ENCODE measurements at regions of chr14 and their contacts with region 1.

Region 1: GRCh38 chr14:50619556-50620141 is 48.5 kb downstream of the SAV1 start:
- DNase-seq: no peak
- H3K4me3 ChIP-seq: no peak overlapping the region
- H3K27ac ChIP-seq: no peak overlapping the region
- H3K4me1 ChIP-seq: no peaks in the 10 kb centered on the region
- H3K27me3 ChIP-seq: no peaks in the 10 kb centered on the region
- CTCF ChIP-seq: peak in 2 of 3 experiments; percentile 47 to 65; a peak in 3 of 4 replicates
- EP300 ChIP-seq: no peak
- POLR2A ChIP-seq: no peak
- RAD21 ChIP-seq: peak; percentile 57 to 69

Region 2: DNA sequence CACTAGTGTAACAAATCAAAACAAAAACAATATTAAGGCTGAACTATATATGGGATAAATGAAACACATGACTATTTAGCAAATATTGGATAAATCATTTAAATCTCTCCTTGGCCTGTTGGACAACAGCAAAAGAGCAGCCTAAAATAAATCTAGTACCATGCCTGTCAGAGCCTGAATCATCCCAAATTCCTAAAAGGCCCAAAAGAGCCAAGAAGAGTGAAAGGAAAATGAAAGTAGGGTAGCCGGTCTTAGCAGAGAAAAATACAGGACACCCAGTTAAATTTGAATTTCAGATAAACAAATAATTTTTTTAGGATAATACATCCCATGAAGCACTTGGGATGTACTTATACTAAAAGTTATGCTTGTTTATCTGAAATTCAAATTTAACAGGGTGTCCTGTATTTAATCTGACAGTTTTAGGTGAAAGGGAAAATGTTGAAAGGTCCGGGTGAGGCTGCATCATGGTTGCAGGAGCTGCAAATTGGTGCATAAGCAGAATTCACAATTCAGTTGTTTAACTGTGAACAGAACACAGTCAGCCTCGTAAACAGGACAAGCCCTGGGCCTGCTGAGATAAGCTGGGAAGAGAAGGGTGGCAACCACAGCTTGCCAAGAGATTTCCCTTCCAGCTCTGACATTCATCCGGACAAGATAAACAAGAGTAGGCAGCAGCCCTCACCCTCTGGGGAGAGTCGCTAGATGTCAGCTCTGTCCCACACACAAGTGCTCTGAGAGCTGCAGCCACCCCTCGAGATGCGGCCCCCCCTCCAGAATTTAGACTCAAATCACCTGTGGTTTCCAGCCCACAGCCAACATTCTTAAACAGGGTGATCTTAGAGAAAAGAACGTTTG is 277.2 kb before region 1 on chr14:
- CTCF ChIA-PET with region 1: no interaction called
- POLR2A ChIA-PET with region 1: no interaction called
- DNase-seq: no peak
- H3K4me3 ChIP-seq: no peak overlapping the region
- H3K27ac ChIP-seq: 0 out of 2 replicates have a peak overlapping the region, but pooled peaks have one; percentile 35
- H3K4me1 ChIP-seq: peaks cover 0 to 3% (median 2%) of the 10 kb centered on the region in 4 experiments; a peak in 4 of 7 replicates
- H3K27me3 ChIP-seq: no peaks in the 10 kb centered on the region
- CTCF ChIP-seq: peak; percentile 34 to 50 (median 35)
- EP300 ChIP-seq: no peak
- POLR2A ChIP-seq: no peak
- RAD21 ChIP-seq: peak; percentile 64 to 76

Region 3: GRCh38 chr14:50447461-50447860 is 172.2 kb before region 1 on chr14:
- CTCF ChIA-PET with region 1: no interaction called
- POLR2A ChIA-PET with region 1: no interaction called
- DNase-seq: no peak
- H3K4me3 ChIP-seq: no peak overlapping the region
- H3K27ac ChIP-seq: no peak overlapping the region
- H3K4me1 ChIP-seq: no peaks in the 10 kb centered on the region
- H3K27me3 ChIP-seq: no peaks in the 10 kb centered on the region
- CTCF ChIP-seq: no peak
- EP300 ChIP-seq: no peak
- POLR2A ChIP-seq: no peak
- RAD21 ChIP-seq: no peak

Region 4: DNA sequence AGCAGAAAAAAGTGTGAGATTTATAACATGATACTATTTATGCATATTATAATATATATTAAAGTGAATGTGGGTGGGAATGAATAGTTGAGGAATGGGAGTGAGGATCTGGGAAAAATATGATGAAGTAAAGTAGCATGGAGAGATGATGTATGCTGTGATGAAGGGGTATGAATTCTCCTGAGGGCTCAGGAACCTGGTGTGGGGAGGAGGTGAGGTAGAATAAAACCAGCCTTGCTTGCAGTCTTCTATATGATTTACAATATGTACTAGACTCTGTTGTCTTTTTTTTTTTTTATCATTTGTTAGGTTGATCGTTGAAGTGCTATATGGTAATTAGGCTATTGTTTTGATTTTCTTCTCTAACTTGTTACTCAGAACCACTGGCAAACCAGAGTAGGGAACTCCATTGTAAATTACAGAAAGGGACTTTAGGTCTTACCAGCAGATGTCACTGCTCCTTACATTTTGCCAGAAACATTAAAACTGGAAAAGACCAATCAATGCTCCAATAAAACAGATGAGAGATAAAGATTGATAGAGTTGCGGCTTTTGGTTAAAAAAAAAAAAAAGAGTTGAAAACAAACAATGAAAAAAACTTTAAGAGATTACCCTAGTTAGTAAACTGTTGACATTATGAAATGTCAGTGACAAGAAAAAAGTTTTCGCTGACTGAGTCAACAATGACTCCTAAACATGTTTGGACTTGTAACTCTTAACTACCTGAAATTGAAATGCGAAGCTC is 19.8 kb before region 1 on chr14:
- CTCF ChIA-PET with region 1: interaction called, 11 read pairs
- POLR2A ChIA-PET with region 1: no interaction called
- DNase-seq: no peak
- H3K4me3 ChIP-seq: no peak overlapping the region; a peak in 1 of 8 replicates
- H3K27ac ChIP-seq: no peak overlapping the region
- H3K4me1 ChIP-seq: peaks cover 0 to 6% (median 0%) of the 10 kb centered on the region in 4 experiments; a peak in 2 of 7 replicates
- H3K27me3 ChIP-seq: no peaks in the 10 kb centered on the region
- CTCF ChIP-seq: peak in 2 of 3 experiments; percentile 45 to 47; a peak in 2 of 4 replicates
- EP300 ChIP-seq: no peak
- POLR2A ChIP-seq: no peak
- RAD21 ChIP-seq: peak; percentile 69 to 70

Region 5: GRCh38 chr14:50607181-50607580 is 12.5 kb before region 1 on chr14:
- CTCF ChIA-PET with region 1: interaction called, 13 read pairs
- POLR2A ChIA-PET with region 1: no interaction called
- DNase-seq: no peak
- H3K4me3 ChIP-seq: no peak overlapping the region
- H3K27ac ChIP-seq: no peak overlapping the region
- H3K4me1 ChIP-seq: no peaks in the 10 kb centered on the region
- H3K27me3 ChIP-seq: no peaks in the 10 kb centered on the region
- CTCF ChIP-seq: no peak
- EP300 ChIP-seq: no peak
- POLR2A ChIP-seq: no peak
- RAD21 ChIP-seq: no peak

Region 6: DNA sequence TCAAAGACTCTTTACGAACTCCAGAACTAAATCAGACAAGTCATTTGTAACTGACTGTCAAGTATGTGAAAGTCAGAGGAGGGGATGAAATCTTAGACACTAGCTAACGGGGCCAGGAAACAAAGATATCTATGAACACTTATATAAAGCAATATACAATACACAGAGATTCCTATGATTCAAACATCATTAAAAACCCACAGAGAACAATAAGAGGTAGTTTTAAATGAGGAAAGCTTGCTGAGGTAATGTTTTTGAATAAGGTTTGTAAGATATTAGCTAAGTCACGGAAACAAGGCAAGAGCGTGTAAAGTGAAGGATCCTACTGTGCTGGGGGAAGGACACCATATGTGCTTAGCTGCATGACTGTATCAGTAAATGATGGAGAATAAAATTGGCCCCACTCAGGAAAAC is 11.8 kb after region 1 on chr14:
- CTCF ChIA-PET with region 1: interaction called, 24 read pairs
- POLR2A ChIA-PET with region 1: interaction called, 4 read pairs
- DNase-seq: no peak
- H3K4me3 ChIP-seq: no peak overlapping the region
- H3K27ac ChIP-seq: no peak overlapping the region
- H3K4me1 ChIP-seq: no peaks in the 10 kb centered on the region
- H3K27me3 ChIP-seq: no peaks in the 10 kb centered on the region
- CTCF ChIP-seq: no peak
- EP300 ChIP-seq: no peak
- POLR2A ChIP-seq: no peak
- RAD21 ChIP-seq: no peak

Region 7: GRCh38 chr14:50714450-50715073 is 94.9 kb after region 1 on chr14:
- CTCF ChIA-PET with region 1: interaction called, 12 read pairs
- POLR2A ChIA-PET with region 1: no interaction called
- DNase-seq: no peak
- H3K4me3 ChIP-seq: no peak overlapping the region
- H3K27ac ChIP-seq: no peak overlapping the region
- H3K4me1 ChIP-seq: peaks cover 0 to 2% (median 0%) of the 10 kb centered on the region in 4 experiments; a peak in 1 of 7 replicates
- H3K27me3 ChIP-seq: no peaks in the 10 kb centered on the region
- CTCF ChIP-seq: peak in 1 of 3 experiments; percentile 55; a peak in 2 of 4 replicates
- EP300 ChIP-seq: no peak
- POLR2A ChIP-seq: no peak
- RAD21 ChIP-seq: peak; percentile 50 to 60

Region 8: GRCh38 chr14:50756300-50756699 is 136.7 kb after region 1 on chr14:
- CTCF ChIA-PET with region 1: no interaction called
- POLR2A ChIA-PET with region 1: no interaction called
- DNase-seq: no peak
- H3K4me3 ChIP-seq: no peak overlapping the region
- H3K27ac ChIP-seq: no peak overlapping the region
- H3K4me1 ChIP-seq: no peaks in the 10 kb centered on the region
- H3K27me3 ChIP-seq: no peaks in the 10 kb centered on the region
- CTCF ChIP-seq: no peak
- EP300 ChIP-seq: no peak
- POLR2A ChIP-seq: no peak
- RAD21 ChIP-seq: no peak

Region 9: GRCh38 chr14:50778721-50779483 is 159.3 kb after region 1 on chr14:
- CTCF ChIA-PET with region 1: interaction called, 20 read pairs
- POLR2A ChIA-PET with region 1: no interaction called
- DNase-seq: no peak
- H3K4me3 ChIP-seq: no peak overlapping the region
- H3K27ac ChIP-seq: no peak overlapping the region
- H3K4me1 ChIP-seq: peaks cover 0 to 3% (median 0%) of the 10 kb centered on the region in 4 experiments; a peak in 1 of 7 replicates
- H3K27me3 ChIP-seq: no peaks in the 10 kb centered on the region
- CTCF ChIP-seq: no peak
- EP300 ChIP-seq: no peak
- POLR2A ChIP-seq: no peak
- RAD21 ChIP-seq: no peak